ENCODE measurements at regions of chr1 and their contacts with region 1.

Region 1: GRCh38 chr1:31422505-31423319 is 9.7 kb downstream of the SERINC2 start:
- DNase-seq: peak; percentile 47
- ATAC-seq: peak; percentile 71
- H3K4me3 ChIP-seq: peak overlapping the region; percentile 29; the same call in 1 of the 2 replicates
- H3K27ac ChIP-seq: no peak overlapping the region
- H3K4me1 ChIP-seq: peaks cover 11% of the 10 kb centered on the region
- H3K27me3 ChIP-seq: no peaks in the 10 kb centered on the region
- CTCF ChIP-seq: peak; percentile 94 to 96 (median 95)
- EP300 ChIP-seq: no peak
- POLR2A ChIP-seq: no peak
- RAD21 ChIP-seq: peak; percentile 80

Region 2: DNA sequence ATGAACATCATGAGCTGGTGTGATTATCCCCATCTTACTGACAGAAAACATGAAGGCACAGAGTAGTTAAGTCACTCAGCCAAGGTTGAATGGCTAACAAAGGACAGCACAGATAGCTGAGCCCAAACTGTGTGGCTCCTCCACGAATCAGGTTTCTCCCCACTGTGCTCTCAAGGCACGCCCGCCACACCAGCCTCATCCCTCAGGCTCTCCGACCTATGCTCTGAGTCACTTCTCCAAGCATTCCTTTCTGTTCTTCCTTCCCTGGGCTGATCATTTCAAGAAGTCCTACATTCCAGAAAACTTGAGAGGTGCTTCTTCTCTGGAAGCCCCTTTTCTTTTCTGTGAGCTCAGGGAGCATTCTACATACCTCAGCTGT is 488.8 kb before region 1 on chr1:
- CTCF ChIA-PET with region 1: no interaction called
- POLR2A ChIA-PET with region 1: no interaction called
- RAD21 ChIA-PET with region 1: no interaction called
- SMC1A ChIA-PET with region 1: no interaction called
- in situ Hi-C with region 1: no loop called
- intact Hi-C with region 1: no loop called
- DNase-seq: no peak
- ATAC-seq: no peak
- H3K4me3 ChIP-seq: no peak overlapping the region
- H3K27ac ChIP-seq: no peak overlapping the region
- H3K4me1 ChIP-seq: no peaks in the 10 kb centered on the region; the same call in 1 of the 2 replicates
- H3K27me3 ChIP-seq: no peaks in the 10 kb centered on the region
- CTCF ChIP-seq: no peak
- EP300 ChIP-seq: no peak
- POLR2A ChIP-seq: no peak; the same call in 1 of the 2 replicates
- RAD21 ChIP-seq: no peak

Region 3: DNA sequence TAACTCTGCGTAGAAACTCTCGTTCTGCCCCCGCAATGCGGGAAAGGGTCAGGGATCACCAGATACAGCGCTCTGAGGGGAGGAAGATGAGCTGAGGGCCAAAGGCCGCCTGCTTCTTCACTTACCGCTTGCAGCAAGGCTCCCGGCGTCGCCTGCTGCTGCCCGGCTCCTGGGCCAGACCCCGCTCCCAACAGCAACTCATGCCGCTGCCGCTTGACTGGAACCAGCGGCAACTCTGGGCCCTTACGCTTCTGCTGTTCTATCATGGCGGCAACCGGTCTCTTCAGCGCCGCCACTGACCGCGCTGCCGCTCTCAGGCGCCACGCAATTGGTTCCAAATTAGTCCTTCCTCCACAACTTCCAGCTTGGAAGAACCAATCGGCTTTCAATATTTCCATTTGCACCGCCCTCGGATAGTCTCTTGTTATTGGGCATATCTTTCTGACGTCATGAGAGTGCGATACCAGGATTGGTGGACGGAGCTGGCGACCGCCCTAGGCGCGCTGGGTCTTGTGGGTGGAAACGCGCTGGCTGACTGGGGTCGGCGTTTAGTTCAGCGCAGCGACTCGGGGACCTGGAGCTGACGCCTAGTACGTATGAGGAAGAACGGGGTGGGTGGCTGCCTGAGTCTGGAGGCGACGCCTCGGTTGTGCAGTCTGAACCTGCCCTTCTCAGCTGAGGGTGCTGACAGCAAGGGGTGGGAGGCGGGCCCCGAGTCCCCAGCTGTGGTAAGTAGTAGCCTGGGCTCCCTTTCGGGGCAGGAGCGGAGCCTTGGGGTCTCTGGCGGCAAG is 126.0 kb before region 1 on chr1 and contains the starts of genes SNRNP40 and ZCCHC17:
- CTCF ChIA-PET with region 1: interaction called, 4 read pairs
- POLR2A ChIA-PET with region 1: no interaction called
- RAD21 ChIA-PET with region 1: interaction called, 3 read pairs
- SMC1A ChIA-PET with region 1: interaction called, 3 read pairs
- in situ Hi-C with region 1: no loop called
- intact Hi-C with region 1: loop called (anchors 2 kb)
- DNase-seq: peak; percentile 98
- ATAC-seq: peak; percentile 97
- H3K4me3 ChIP-seq: peak within 1 kb of the TSS; percentile 96
- H3K27ac ChIP-seq: peak within 1 kb of the TSS; percentile 88
- H3K4me1 ChIP-seq: no peaks in the 10 kb centered on the region
- H3K27me3 ChIP-seq: no peaks in the 10 kb centered on the region
- CTCF ChIP-seq: peak in 1 of 3 experiments; percentile 8; a peak in 2 of 6 replicates
- EP300 ChIP-seq: peak in 1 of 2 experiments; percentile 28; a peak in 1 of 4 replicates
- POLR2A ChIP-seq: peak; percentile 99
- RAD21 ChIP-seq: no peak
- polyA plus RNA-seq, gene SNRNP40: 34.9 to 45.9 TPM
- polyA plus RNA-seq, gene ZCCHC17: 63.9 to 86.3 TPM

Region 4: GRCh38 chr1:31405578-31406245 is 17.0 kb before region 1 on chr1:
- CTCF ChIA-PET with region 1: interaction called, 16 read pairs
- POLR2A ChIA-PET with region 1: no interaction called
- RAD21 ChIA-PET with region 1: interaction called, 3 read pairs
- SMC1A ChIA-PET with region 1: interaction called, 9 read pairs
- in situ Hi-C with region 1: no loop called
- intact Hi-C with region 1: no loop called
- DNase-seq: no peak
- ATAC-seq: no peak
- H3K4me3 ChIP-seq: no peak overlapping the region
- H3K27ac ChIP-seq: no peak overlapping the region
- H3K4me1 ChIP-seq: no peaks in the 10 kb centered on the region
- H3K27me3 ChIP-seq: peaks cover 0 to 2% of the 10 kb centered on the region in 2 experiments; a peak in 1 of 4 replicates
- CTCF ChIP-seq: no peak
- EP300 ChIP-seq: no peak
- POLR2A ChIP-seq: no peak
- RAD21 ChIP-seq: no peak

Region 5: DNA sequence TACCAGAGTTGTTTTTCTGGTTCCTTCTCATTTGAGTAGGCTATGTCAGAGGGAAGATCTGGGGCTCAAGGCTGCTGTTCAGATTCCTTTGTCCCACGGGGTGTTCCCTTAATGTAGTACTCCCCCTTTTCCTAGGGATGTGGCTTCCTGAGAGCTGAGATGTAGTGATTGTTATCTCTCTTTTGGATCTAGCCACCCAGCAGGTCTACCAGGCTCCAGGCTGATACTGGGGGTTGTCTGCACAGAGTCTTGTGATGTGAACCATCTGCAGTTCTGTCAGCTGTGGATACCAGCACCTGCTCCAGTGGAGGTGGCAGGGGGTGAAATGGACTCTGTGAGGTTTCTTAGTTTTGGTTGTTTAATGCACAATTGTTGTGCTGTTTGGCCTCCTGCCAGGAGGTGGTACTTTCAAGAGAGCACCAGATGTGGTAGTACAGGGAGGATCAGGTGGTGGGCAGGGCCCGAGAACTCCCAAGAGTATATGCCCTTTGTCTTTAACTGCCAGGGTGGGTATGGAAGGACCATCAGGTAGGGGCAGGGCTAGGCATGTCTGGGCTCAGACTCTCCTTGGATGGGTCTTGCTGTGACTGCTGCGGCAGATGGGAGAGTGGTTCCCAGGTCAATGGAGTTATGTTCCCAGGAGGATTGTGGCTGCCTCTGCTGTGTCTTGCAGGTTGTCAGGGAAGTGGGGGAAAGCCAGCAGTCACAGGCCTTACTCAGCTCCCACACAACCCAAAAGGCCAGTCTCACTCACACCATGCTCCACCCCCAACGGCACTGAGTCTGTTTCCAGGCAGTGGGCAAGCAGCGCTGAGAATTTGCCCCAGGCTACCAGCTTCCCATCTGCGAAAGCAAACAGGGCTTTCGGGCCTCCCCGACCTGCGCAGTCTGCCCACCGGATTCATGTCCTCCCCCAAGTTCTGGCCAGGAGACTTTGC is 54.4 kb after region 1 on chr1:
- CTCF ChIA-PET with region 1: interaction called, 15 read pairs
- POLR2A ChIA-PET with region 1: interaction called, 5 read pairs
- RAD21 ChIA-PET with region 1: interaction called, 5 read pairs
- SMC1A ChIA-PET with region 1: interaction called, 10 read pairs
- in situ Hi-C with region 1: no loop called
- intact Hi-C with region 1: loop called (anchors 2 kb)
- DNase-seq: peak; percentile 77
- ATAC-seq: peak; percentile 89
- H3K4me3 ChIP-seq: no peak overlapping the region
- H3K27ac ChIP-seq: no peak overlapping the region
- H3K4me1 ChIP-seq: no peaks in the 10 kb centered on the region
- H3K27me3 ChIP-seq: no peaks in the 10 kb centered on the region
- CTCF ChIP-seq: no peak
- EP300 ChIP-seq: 0 out of 4 replicates have a peak, but pooled peaks of 1 of the 2 experiments have one; percentile 23
- POLR2A ChIP-seq: no peak
- RAD21 ChIP-seq: no peak

Region 6: GRCh38 chr1:31531177-31531999 is 108.7 kb after region 1 on chr1:
- CTCF ChIA-PET with region 1: interaction called, 25 read pairs
- POLR2A ChIA-PET with region 1: no interaction called
- RAD21 ChIA-PET with region 1: no interaction called
- SMC1A ChIA-PET with region 1: interaction called, 7 read pairs
- in situ Hi-C with region 1: no loop called
- intact Hi-C with region 1: no loop called
- DNase-seq: no peak
- ATAC-seq: no peak
- H3K4me3 ChIP-seq: no peak overlapping the region
- H3K27ac ChIP-seq: no peak overlapping the region
- H3K4me1 ChIP-seq: no peaks in the 10 kb centered on the region
- H3K27me3 ChIP-seq: no peaks in the 10 kb centered on the region; a peak in 1 of 4 replicates
- CTCF ChIP-seq: no peak
- EP300 ChIP-seq: no peak
- POLR2A ChIP-seq: no peak
- RAD21 ChIP-seq: no peak

Region 7: GRCh38 chr1:31583225-31583997 is 160.7 kb after region 1 on chr1:
- CTCF ChIA-PET with region 1: no interaction called
- POLR2A ChIA-PET with region 1: no interaction called
- RAD21 ChIA-PET with region 1: no interaction called
- SMC1A ChIA-PET with region 1: no interaction called
- in situ Hi-C with region 1: no loop called
- intact Hi-C with region 1: no loop called
- DNase-seq: no peak
- ATAC-seq: no peak
- H3K4me3 ChIP-seq: no peak overlapping the region
- H3K27ac ChIP-seq: no peak overlapping the region
- H3K4me1 ChIP-seq: no peaks in the 10 kb centered on the region
- H3K27me3 ChIP-seq: no peaks in the 10 kb centered on the region; a peak in 2 of 4 replicates
- CTCF ChIP-seq: no peak
- EP300 ChIP-seq: no peak
- POLR2A ChIP-seq: no peak
- RAD21 ChIP-seq: no peak

Region 8: GRCh38 chr1:31593770-31594632 is 171.3 kb after region 1 on chr1:
- CTCF ChIA-PET with region 1: interaction called, 15 read pairs
- POLR2A ChIA-PET with region 1: interaction called, 6 read pairs
- RAD21 ChIA-PET with region 1: interaction called, 3 read pairs
- SMC1A ChIA-PET with region 1: interaction called, 4 read pairs
- in situ Hi-C with region 1: no loop called
- intact Hi-C with region 1: no loop called
- DNase-seq: peak; percentile 26
- ATAC-seq: peak; percentile 100
- H3K4me3 ChIP-seq: no peak overlapping the region
- H3K27ac ChIP-seq: no peak overlapping the region
- H3K4me1 ChIP-seq: no peaks in the 10 kb centered on the region; the same call in 1 of the 2 replicates
- H3K27me3 ChIP-seq: no peaks in the 10 kb centered on the region
- CTCF ChIP-seq: peak; percentile 90 to 97 (median 97)
- EP300 ChIP-seq: no peak
- POLR2A ChIP-seq: no peak
- RAD21 ChIP-seq: peak; percentile 67